ENCODE measurements at regions of chr11 and their contacts with region 1.

Region 1: GRCh38 chr11:75214411-75214821 is 26.2 kb upstream of the TPBGL start:
- DNase-seq: peak; percentile 87 to 92 (median 90)
- H3K4me3 ChIP-seq: no peak overlapping the region
- H3K27ac ChIP-seq: no peak overlapping the region
- H3K4me1 ChIP-seq: no peaks in the 10 kb centered on the region
- H3K27me3 ChIP-seq: peaks cover 0 to 12% (median 2%) of the 10 kb centered on the region in 5 experiments

Region 2: GRCh38 chr11:75126564-75126963 is 87.9 kb before region 1 on chr11:
- CTCF ChIA-PET with region 1: no interaction called
- POLR2A ChIA-PET with region 1: no interaction called
- DNase-seq: no peak
- H3K4me3 ChIP-seq: no peak overlapping the region
- H3K27ac ChIP-seq: no peak overlapping the region
- H3K4me1 ChIP-seq: no peaks in the 10 kb centered on the region
- H3K27me3 ChIP-seq: peaks cover 0 to 3% (median 0%) of the 10 kb centered on the region in 5 experiments

Region 3: DNA sequence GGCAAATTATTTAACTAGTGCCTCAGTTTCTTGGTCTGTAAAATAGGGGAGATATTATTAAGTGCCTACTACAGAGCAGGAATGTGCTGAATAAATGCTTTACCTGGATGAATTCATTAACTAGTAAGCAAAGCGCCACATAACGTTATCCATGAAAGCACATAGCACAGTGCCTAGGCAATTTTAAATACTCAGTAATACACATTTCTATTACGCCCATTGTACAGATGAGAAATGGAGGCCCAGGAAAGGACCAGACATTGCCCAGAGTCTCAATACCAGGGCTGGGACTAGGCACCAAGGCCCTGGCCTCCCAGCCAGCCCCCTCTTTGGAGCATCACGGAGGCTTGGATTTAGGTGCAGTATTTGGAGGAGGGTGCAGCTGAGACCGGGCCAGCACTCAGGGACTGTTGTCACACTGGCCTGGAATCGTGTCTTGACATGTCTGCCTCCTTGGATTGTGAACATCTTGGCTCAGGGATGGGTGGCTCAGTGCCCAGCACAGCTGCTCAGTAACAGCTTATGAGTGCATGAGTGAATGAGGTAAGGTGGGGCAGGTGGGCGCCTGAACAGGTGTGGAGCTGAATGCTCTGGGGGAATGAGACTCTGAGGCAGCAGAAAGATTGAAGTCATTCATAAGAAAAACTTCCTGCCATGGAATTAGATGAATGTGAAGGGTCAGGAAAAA is 16.0 kb before region 1 on chr11:
- CTCF ChIA-PET with region 1: no interaction called
- POLR2A ChIA-PET with region 1: no interaction called
- DNase-seq: no peak
- H3K4me3 ChIP-seq: no peak overlapping the region
- H3K27ac ChIP-seq: no peak overlapping the region
- H3K4me1 ChIP-seq: peaks cover 0 to 10% (median 3%) of the 10 kb centered on the region in 4 experiments
- H3K27me3 ChIP-seq: peaks cover 0 to 8% (median 0%) of the 10 kb centered on the region in 5 experiments

Region 4: GRCh38 chr11:75233742-75234172 is 19.3 kb after region 1 on chr11:
- CTCF ChIA-PET with region 1: interaction called, 13 read pairs
- POLR2A ChIA-PET with region 1: no interaction called
- DNase-seq: peak; percentile 32 to 65 (median 58)
- H3K4me3 ChIP-seq: no peak overlapping the region
- H3K27ac ChIP-seq: no peak overlapping the region
- H3K4me1 ChIP-seq: no peaks in the 10 kb centered on the region
- H3K27me3 ChIP-seq: peaks cover 0 to 15% (median 10%) of the 10 kb centered on the region in 5 experiments

Measured in common myeloid progenitor, CD34-positive (primary cell).